ENCODE measurements at regions of chr2 and their contacts with region 1.

Region 1: DNA sequence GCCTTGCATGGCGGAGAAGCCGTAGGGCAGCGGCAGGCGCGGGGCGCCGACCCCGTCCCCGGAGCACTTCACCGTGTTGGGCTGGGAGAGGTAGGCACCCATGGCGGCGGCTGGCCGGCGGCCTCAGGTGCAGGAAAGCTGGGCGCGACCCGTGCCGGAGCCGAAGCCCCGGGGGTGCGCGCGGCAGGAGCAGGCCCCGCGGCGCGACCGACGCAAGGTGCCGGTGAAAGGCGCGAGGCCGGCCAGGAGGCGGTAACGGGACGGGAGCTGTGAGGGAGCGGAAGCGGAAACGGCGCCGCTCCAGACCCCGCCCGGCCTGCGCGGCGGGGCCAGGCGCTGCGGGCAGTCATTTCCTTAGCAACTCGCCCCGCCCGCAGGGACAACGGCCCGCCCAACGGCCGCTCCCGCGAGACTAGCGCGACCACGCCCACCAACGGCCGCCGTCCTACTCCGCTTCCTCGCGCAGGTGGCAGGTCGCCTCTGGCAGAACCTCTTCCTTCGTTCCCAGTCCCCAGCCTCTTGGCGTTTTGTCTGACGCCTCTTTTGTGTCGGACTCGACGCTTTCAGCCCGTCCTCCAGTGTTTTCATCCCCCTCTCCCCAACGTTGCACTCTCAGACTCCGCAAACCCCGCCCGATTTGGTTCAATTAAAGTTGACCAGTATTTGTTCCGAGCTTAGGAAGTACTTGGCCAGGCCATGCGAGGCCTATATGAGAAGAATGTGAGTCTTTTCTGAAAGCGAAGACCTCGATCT is at the start of gene PPM1G:
- DNase-seq: peak; percentile 86 to 97
- H3K4me3 ChIP-seq: peak within 1 kb of the TSS; percentile 97
- H3K27ac ChIP-seq: peak within 1 kb of the TSS; percentile 80
- H3K4me1 ChIP-seq: peaks cover 28% of the 10 kb centered on the region
- H3K27me3 ChIP-seq: no peaks in the 10 kb centered on the region
- CTCF ChIP-seq: no peak
- total RNA-seq, gene PPM1G: 114 and 136 TPM in 2 replicates

Region 2: GRCh38 chr2:27281855-27282559 is 127.5 kb before region 1 on chr2 and contains the start of gene TRIM54:
- CTCF ChIA-PET with region 1: interaction called, 18 read pairs
- POLR2A ChIA-PET with region 1: no interaction called
- intact Hi-C with region 1: no loop called
- DNase-seq: peak; percentile 43 to 73
- H3K4me3 ChIP-seq: peak within 1 kb of the TSS; percentile 29; the same call in 1 of the 2 replicates
- H3K27ac ChIP-seq: peak within 1 kb of the TSS; percentile 70
- H3K4me1 ChIP-seq: peaks cover 37% of the 10 kb centered on the region
- H3K27me3 ChIP-seq: no peaks in the 10 kb centered on the region
- CTCF ChIP-seq: no peak
- total RNA-seq, gene TRIM54: 8.2 and 9.8 TPM in 2 replicates

Region 3: GRCh38 chr2:27428213-27428977 is 18.9 kb after region 1 on chr2 and contains the start of gene NRBP1:
- CTCF ChIA-PET with region 1: no interaction called
- POLR2A ChIA-PET with region 1: interaction called, 5 read pairs
- intact Hi-C with region 1: loop called (anchors 1 kb)
- DNase-seq: peak; percentile 77 to 90
- H3K4me3 ChIP-seq: peak within 1 kb of the TSS; percentile 64
- H3K27ac ChIP-seq: peak within 1 kb of the TSS; percentile 64
- H3K4me1 ChIP-seq: peaks cover 27% of the 10 kb centered on the region
- H3K27me3 ChIP-seq: no peaks in the 10 kb centered on the region
- CTCF ChIP-seq: no peak
- total RNA-seq, gene NRBP1: 67.9 and 83.9 TPM in 2 replicates

Region 4: DNA sequence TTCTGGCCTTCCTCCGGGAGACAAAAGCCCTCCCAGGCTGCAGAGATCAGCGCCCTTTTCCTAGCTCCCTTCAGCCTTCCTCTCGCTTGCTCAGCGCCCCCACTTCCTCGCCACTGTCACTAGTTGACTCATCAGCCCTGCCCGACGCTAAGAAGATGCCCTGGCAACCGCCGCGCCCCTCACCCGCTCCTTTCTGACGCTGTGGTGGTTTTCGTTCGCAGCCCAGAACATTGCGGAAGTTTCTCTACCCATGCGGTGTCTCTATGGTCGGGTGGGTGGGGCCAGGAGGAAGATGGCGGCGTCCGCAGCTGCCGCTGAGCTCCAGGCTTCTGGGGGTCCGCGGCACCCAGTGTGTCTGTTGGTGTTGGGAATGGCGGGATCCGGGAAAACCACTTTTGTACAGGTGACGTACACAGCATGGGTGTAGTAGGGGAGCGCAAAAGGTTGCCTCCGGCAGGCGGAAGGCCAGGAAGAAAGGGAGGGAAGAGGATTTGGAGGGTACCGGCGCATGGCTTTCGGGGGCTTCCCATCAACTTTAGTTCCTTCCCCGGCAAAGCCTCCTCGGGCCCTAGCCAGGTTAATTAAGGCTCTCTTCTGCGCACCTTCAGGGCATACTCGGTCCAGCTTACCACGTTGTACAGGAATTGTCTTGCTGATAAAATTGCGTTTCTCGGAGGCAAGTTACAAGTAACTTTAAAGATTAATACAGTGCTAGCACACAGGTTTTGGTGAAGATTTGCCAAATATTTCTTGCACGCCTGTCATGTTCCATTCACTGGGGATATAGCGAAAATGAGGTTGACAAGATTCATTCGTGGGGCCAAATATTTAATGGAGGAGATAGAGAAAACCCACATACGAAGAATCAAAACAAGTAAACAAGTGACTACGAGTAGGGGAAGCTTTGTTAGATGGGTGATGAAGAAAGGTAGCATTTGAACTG is 219.5 kb after region 1 on chr2 and contains the starts of genes CCDC121 and GPN1:
- CTCF ChIA-PET with region 1: no interaction called
- POLR2A ChIA-PET with region 1: no interaction called
- intact Hi-C with region 1: loop called (anchors 5 kb)
- DNase-seq: peak; percentile 89 to 91
- H3K4me3 ChIP-seq: peak within 1 kb of the TSS; percentile 86
- H3K27ac ChIP-seq: peak within 1 kb of the TSS; percentile 86
- H3K4me1 ChIP-seq: peaks cover 27% of the 10 kb centered on the region
- H3K27me3 ChIP-seq: no peaks in the 10 kb centered on the region
- CTCF ChIP-seq: no peak
- total RNA-seq, gene CCDC121: 1.9 and 2.9 TPM in 2 replicates
- total RNA-seq, gene GPN1: 37.3 and 45.1 TPM in 2 replicates

Region 5: DNA sequence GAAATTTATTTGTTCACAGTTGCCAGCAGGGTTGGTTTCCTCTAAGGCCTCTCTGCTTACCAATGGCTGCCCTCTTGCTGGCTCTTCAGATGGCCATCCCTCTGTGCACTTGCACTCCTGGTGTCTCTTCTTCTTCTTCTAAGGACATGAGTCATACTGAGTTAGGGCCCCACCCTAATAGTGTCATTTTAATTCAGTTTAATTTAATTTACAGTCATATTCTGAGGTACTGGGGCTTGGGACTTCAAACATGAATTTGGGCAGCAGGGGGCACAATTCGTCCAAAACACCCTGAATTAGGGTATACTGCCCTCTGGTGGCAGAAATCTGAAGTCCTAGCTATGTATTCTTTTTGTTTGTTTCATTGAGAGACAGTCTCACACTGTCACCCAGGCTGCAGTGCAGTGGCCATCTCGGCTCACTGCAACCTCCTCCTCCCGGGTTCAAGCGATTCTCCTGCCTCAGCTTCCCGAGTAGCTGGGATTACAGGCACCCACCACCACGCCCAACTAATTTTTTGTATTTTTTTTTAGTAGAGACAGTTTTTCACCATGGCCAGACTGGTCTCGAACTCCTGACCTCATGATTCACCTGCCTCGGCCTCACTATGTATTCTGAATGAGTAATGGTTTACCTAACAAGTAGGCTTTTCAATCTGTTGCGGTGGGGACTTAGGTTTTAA is 274.0 kb after region 1 on chr2:
- CTCF ChIA-PET with region 1: no interaction called
- POLR2A ChIA-PET with region 1: no interaction called
- intact Hi-C with region 1: loop called (anchors 1 kb)
- DNase-seq: peak; percentile 78 to 82
- H3K4me3 ChIP-seq: no peak overlapping the region
- H3K27ac ChIP-seq: peak overlapping the region; percentile 98
- H3K4me1 ChIP-seq: peaks cover 44% of the 10 kb centered on the region
- H3K27me3 ChIP-seq: no peaks in the 10 kb centered on the region
- CTCF ChIP-seq: peak; percentile 100

Region 6: GRCh38 chr2:27833931-27834330 is 424.4 kb after region 1 on chr2:
- CTCF ChIA-PET with region 1: no interaction called
- POLR2A ChIA-PET with region 1: no interaction called
- intact Hi-C with region 1: no loop called
- DNase-seq: no peak
- H3K4me3 ChIP-seq: no peak overlapping the region
- H3K27ac ChIP-seq: no peak overlapping the region
- H3K4me1 ChIP-seq: no peaks in the 10 kb centered on the region
- H3K27me3 ChIP-seq: no peaks in the 10 kb centered on the region
- CTCF ChIP-seq: no peak

Measured in PC-9 (cell line).